MCF 10A (cell line): ENCODE measurements at regions of chr6 and their contacts with region 1.

Region 1: GRCh38 chr6:150267686-150268561 is 100.9 kb upstream of the IYD start:
- DNase-seq: peak; percentile 77
- H3K4me3 Mint-ChIP-seq: no peak overlapping the region
- H3K27ac Mint-ChIP-seq: peak overlapping the region; percentile 92
- H3K4me1 Mint-ChIP-seq: peaks cover 51% of the 10 kb centered on the region
- H3K27me3 Mint-ChIP-seq: no peaks in the 10 kb centered on the region
- CTCF ChIP-seq: no peak

Region 2: GRCh38 chr6:150153542-150153876 is 114.4 kb before region 1 on chr6:
- CTCF ChIA-PET with region 1: interaction called, 3 read pairs
- POLR2A ChIA-PET with region 1: interaction called, 59 read pairs
- intact Hi-C with region 1: no loop called
- DNase-seq: no peak
- H3K4me3 Mint-ChIP-seq: peak overlapping the region; percentile 25
- H3K27ac Mint-ChIP-seq: peak overlapping the region; percentile 77
- H3K4me1 Mint-ChIP-seq: peaks cover 52% of the 10 kb centered on the region
- H3K27me3 Mint-ChIP-seq: no peaks in the 10 kb centered on the region
- CTCF ChIP-seq: no peak

Region 3: GRCh38 chr6:150250826-150251225 is 17.1 kb before region 1 on chr6:
- CTCF ChIA-PET with region 1: interaction called, 15 read pairs
- POLR2A ChIA-PET with region 1: interaction called, 282 read pairs
- intact Hi-C with region 1: loop called (anchors 1 kb)
- DNase-seq: peak; percentile 99
- H3K4me3 Mint-ChIP-seq: peak overlapping the region; percentile 46
- H3K27ac Mint-ChIP-seq: peak overlapping the region; percentile 95
- H3K4me1 Mint-ChIP-seq: peaks cover 42% of the 10 kb centered on the region
- H3K27me3 Mint-ChIP-seq: no peaks in the 10 kb centered on the region
- CTCF ChIP-seq: no peak

Region 4: DNA sequence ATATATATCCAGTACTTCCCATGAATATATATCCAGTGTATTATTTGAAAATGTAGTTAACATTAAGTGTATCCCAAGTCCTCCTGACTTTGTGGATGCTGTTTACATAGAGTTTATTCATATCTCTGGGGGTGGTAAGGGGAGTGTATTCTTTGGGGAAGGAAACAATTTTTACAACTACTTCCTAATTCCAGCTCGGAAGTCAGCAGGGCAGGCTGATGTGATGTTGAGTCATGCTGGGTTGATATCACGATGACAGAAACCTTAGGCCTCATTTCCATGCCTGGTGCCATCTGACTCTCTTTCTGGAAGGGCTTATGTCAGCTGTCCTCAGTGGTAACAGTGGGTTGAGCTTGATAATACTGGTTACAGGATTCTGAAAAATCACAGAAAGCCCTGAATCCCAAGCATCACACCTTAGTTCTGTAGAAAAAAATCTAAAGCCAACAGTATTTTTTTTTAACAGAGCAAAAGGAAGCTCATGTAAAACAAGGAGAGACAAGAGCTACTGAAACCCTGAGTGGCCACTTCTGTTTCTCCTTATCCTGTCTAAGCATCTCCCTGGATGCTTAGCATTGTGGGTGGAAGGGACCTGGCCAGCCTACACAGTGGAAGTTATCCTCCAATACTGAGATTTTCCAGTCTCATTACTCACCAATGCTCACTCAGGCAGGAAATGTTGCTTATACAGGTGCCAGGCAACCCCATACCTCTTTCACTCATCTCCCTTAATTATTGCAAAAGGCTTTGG is 25.7 kb after region 1 on chr6:
- CTCF ChIA-PET with region 1: interaction called, 4 read pairs
- POLR2A ChIA-PET with region 1: interaction called, 116 read pairs
- intact Hi-C with region 1: loop called (anchors 1 kb)
- DNase-seq: peak; percentile 69
- H3K4me3 Mint-ChIP-seq: no peak overlapping the region
- H3K27ac Mint-ChIP-seq: peak overlapping the region; percentile 98
- H3K4me1 Mint-ChIP-seq: peaks cover 46% of the 10 kb centered on the region
- H3K27me3 Mint-ChIP-seq: no peaks in the 10 kb centered on the region
- CTCF ChIP-seq: no peak

Region 5: DNA sequence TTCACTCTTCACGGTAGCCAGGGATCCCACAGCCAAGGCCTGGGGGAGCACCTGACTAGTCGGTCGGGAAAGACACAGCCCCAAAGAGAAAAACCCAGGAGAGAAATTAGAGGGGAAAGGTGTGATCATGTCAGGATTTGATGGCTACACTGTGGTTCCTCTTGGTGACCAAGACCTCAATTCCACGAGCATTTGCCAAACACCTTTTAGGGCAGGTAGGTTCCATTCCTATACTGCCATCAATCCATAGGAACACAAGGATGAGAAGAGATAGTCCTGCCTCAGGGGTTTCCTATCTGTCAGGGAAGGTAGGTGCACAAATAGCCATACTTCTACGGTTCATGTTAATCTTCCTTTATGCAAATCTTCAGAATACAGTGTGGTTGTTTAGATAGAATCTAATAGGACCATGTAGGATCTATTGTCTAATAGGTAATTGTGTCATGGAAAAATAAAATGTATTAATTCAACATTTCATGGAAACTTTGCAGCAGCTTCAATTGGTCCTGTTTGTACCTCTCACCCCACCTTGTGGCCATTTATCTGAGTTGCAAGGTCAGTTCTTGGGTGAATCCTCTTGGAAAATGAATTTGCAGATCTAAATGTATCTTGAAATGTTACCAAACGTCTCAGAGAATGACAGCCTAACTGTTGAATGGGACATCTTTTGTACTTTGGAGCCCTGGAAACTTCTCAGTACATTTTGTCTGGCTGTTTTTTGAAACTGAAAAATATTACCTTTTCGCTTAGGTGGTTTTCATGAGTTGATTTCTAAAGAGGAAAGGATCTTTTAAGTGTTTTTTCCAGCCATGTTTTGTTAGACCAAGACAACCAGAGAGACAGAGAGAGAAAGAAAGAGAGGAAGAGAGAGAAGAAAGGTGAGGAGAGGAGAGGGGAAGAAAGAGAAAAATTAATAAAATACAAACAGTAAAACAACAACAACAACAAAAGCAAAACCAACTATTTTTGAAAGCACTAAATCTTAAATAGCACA is 67.2 kb after region 1 on chr6:
- CTCF ChIA-PET with region 1: interaction called, 4 read pairs
- POLR2A ChIA-PET with region 1: interaction called, 4 read pairs
- intact Hi-C with region 1: loop called (anchors 2 kb)
- DNase-seq: peak; percentile 76
- H3K4me3 Mint-ChIP-seq: no peak overlapping the region
- H3K27ac Mint-ChIP-seq: peak overlapping the region; percentile 4
- H3K4me1 Mint-ChIP-seq: peaks cover 18% of the 10 kb centered on the region
- H3K27me3 Mint-ChIP-seq: no peaks in the 10 kb centered on the region
- CTCF ChIP-seq: peak; percentile 82